BJ (cell line): ENCODE measurements at regions of chr1 and their contacts with region 1.

Region 1: DNA sequence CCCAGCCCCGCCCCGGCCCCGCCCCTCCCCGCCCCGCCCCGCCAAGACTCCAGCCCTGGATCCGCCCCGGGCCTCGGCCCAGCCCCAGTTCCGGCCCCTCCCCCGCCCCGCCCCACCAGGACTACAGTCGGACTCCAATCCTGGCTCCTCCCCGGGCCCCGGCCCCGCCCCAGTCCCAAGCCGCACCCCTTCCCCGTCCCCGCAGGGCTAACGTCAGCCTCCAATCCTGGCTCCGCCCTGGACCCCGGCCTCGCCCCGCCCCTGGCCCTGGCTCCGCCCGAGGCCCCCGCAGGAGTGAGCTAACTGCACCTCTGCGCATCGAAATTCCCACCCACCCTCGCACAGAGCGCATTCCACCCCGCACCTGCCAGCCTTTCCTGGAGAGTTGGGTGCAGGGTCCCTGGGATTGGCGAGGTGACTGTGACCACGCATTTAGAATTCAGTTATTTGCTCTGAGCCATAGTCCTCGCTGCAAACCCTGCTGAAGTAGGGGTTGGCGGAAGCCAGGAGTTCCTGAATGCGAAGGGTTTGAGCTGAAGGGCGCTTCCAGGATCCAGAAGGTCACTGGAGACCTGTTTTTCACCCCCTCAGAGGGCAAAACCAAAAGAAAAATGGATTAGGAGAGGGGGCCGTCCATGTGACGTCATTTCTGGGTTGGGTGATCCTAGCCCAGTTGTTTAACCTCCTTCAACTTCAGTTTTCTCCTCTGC is 588 bp upstream of the IGSF8 start:
- DNase-seq: peak; percentile 41
- H3K4me3 ChIP-seq: peak overlapping the region; percentile 65
- H3K27me3 ChIP-seq: no peaks in the 10 kb centered on the region
- CTCF ChIP-seq: no peak

Region 2: GRCh38 chr1:159911326-159912070 is 187.5 kb before region 1 on chr1:
- CTCF ChIA-PET with region 1: no interaction called
- POLR2A ChIA-PET with region 1: no interaction called
- DNase-seq: no peak
- H3K4me3 ChIP-seq: no peak overlapping the region
- H3K27me3 ChIP-seq: no peaks in the 10 kb centered on the region
- CTCF ChIP-seq: no peak

Region 3: DNA sequence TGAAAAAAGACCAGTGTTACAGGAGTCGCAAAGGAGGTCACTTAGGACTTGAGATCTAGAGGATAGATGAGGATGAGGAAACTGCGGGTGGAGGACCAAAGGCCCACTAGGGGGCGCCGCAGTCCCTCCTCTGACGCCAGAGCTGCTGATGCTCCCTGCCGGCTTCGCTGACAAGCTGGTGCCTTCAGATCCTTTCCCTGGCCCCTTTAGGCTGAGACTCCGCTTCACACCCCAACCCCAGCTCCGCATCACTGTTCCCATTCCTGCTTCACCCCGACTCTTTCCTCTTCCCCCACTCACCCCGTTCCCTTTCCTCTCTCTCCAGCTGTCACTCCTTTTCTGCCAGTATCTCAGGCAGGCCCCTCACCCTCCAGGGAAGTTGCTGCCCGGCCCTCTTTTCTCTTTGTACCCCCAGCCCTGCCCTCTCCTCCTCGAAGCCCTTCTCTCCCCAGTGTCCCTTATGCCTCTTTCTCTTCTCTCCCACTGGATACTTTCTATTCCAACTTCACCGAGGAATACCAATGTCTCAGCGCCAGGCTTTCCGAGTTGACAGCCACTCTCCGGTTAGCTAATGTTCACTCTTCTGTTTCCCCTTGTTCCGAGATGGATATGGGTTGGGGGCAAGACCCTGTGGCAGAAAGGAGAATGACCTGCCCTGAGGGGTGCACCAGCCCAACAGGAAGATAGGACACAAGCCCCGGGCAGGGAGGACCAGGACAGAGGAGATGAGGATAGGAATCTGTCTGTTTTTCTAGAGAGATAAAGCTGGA is 13.1 kb before region 1 on chr1:
- CTCF ChIA-PET with region 1: interaction called, 46 read pairs
- POLR2A ChIA-PET with region 1: interaction called, 7 read pairs
- DNase-seq: no peak
- H3K4me3 ChIP-seq: no peak overlapping the region
- H3K27me3 ChIP-seq: peaks cover 20% of the 10 kb centered on the region
- CTCF ChIP-seq: peak; percentile 91

Region 4: GRCh38 chr1:160149716-160150115 is 50.7 kb after region 1 on chr1:
- CTCF ChIA-PET with region 1: interaction called, 12 read pairs
- POLR2A ChIA-PET with region 1: no interaction called
- DNase-seq: peak; percentile 67
- H3K4me3 ChIP-seq: no peak overlapping the region
- H3K27me3 ChIP-seq: no peaks in the 10 kb centered on the region
- CTCF ChIP-seq: no peak

Region 5: DNA sequence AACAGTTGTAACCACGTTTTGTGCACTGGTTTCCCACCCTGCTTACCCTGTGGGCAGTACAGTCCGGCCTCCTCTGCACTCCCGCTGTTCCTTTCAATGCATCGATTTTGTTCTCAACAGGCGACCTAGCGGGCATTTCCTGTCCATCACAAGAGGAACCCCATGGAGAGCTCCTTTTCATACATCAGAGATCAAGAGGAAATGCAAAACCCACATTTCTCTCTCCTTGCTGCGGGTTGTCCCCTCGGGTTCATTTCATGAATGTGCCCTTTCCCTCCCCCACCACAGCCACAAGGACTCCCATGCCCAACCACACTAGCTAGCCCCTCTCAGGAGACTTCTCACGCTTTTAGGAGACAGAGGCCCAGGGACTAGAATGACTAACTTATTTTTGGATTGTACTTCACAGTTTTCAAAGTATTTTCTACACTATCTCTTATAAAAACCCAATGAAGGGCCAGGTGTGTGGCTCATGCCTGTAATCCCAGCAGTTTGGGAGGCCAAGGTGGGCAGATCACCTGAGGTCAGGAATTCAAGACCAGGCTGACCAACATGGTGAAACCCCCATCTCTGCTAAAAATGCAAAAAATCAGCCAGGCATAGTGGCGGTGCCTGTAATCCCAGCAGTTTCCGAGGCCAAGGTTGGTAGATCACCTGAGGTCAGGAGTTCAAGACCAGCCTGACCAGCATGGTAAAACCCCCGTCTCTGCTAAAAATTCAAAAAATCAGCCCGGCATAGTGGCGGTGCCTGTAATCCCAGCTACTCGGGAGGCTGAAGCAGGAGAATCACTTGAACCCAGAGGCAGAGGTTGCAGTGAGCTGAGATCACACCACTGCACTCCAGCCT is 70.8 kb after region 1 on chr1:
- CTCF ChIA-PET with region 1: interaction called, 13 read pairs
- POLR2A ChIA-PET with region 1: no interaction called
- DNase-seq: no peak
- H3K4me3 ChIP-seq: no peak overlapping the region
- H3K27me3 ChIP-seq: peaks cover 3% of the 10 kb centered on the region; the same call in 1 of the 2 replicates
- CTCF ChIP-seq: no peak

Region 6: DNA sequence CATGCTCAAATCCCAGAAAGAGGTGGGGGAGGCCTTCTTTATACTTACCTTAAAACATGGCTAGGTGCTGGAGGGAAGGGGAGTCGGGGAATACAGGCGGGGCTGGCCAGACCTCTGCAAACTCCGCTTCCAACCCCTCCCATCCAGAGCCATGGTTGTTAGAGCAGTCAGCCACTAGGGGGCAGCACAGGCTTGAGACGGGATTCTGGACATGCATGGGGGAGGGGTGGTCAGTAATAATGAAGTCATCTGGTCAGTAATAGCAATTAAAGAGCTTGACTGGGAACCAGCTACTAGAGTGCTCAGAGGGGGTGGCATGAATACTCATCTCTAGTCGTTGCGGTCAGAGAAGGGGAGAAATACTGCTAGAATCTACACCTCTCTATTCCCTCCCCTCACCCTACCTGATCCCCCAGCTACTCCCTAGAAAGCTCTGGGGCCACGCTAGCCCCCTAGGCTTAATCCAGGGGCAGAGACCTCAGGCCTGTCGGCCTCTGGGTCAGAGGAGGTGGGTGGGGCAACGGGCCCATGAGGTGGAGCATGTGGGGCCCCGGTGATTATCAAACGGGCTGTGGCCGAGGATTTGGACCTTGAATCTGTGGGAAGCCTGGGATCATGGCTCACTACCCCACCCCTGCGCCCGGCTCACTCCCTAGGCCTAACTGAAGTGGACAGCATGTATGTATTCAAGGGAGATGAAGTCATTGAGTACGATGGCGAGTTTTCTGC is 94.2 kb after region 1 on chr1:
- CTCF ChIA-PET with region 1: interaction called, 76 read pairs
- POLR2A ChIA-PET with region 1: no interaction called
- DNase-seq: peak; percentile 40
- H3K4me3 ChIP-seq: no peak overlapping the region
- H3K27me3 ChIP-seq: peaks cover 2% of the 10 kb centered on the region; the same call in 1 of the 2 replicates
- CTCF ChIP-seq: peak; percentile 94

Region 7: GRCh38 chr1:160219062-160219929 is 120.3 kb after region 1 on chr1:
- CTCF ChIA-PET with region 1: interaction called, 82 read pairs
- POLR2A ChIA-PET with region 1: no interaction called
- DNase-seq: peak; percentile 50
- H3K4me3 ChIP-seq: no peak overlapping the region
- H3K27me3 ChIP-seq: no peaks in the 10 kb centered on the region
- CTCF ChIP-seq: peak; percentile 74

Region 8: DNA sequence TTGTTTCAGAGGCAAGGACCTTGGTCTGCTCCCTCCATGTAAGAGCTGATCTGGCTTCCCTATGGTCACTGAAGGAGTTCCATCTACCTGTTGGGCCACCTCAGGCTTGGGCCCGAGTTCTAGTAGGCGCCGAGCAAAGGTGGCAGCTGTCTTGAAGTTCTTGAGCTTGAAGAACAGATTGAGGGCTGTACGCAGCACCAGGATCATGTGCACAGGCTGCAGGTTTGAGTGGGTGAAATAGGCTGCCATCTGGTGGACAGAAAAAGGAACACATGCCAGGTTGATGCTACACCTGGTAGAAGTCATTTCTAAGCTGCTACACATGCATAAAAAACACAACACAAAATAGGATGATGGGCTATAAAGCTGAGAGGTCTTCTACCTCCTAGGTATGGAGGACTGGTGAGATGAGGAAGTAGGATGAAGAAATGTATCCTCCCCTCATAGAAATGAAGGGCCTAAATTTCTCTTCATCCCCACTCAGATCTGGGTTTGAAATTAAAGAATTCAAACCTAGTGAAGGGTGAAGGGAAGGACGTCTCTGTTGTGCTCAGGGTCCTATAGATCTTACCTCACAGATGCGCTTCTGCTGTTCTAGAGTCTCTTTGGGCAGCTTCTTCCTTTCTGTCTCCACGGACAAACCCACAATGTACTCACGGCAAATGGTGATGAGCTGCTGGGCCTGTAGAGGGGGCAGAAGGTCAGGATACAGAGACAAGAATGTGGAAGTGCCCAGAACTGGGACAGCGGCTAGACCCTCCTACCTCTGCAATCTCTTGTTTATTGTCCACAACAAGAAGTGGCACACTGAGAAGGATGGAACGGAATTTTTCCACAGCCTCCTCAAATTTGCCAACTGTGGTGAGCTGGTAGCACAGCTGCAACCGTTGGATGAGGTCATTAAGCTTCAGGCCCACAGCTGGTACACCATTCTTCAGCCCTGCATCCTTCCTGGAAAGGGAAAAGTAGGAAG is 192.5 kb after region 1 on chr1:
- CTCF ChIA-PET with region 1: interaction called, 30 read pairs
- POLR2A ChIA-PET with region 1: no interaction called
- DNase-seq: no peak
- H3K4me3 ChIP-seq: no peak overlapping the region
- H3K27me3 ChIP-seq: no peaks in the 10 kb centered on the region
- CTCF ChIP-seq: peak; percentile 80